Heart right ventricle (tissue), 16 donors: ENCODE measurements at regions of chr3 and their contacts with region 1.

Region 1: DNA sequence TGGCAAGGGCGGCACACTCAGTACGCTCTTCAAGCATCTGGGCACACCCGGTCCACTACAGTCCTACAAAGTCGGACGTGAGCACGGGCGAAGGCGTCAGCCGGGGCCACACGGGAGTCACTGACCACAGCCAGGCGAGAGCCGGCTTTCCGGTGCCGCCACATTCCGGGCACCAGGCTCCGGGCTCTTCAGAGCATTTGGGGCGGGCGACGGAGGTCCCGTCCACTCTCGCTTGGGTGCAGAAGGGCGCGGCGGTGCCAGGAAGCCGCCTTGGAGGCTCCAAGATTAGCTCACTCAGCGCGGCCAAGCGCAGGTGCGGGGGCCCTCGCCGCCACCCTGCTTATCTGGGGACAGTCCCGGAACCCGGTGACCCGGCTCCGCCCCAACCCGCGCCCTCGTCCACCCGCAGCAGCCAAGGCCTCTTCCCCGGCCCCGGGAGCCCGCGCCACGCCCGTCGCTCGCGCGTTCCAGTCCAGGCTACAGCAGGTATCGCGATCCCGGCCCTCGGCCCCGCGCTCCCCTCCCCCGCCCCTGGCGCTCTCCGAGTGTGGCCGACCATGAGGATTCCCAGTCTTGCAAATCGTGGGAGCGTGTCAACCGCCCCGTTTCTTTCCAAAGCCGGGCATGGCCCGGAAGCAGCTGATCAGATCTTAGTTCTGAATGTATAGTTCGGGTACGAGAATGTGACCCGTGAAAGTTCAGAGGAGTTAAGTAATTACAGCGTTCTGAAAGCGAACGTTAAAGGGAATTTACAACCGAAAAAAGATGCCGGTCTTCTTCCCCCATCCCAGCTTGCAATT is at the start of gene ADPRH:
- DNase-seq: peak; percentile 86 to 89
- ATAC-seq: peak; percentile 94 to 96 (median 95)
- H3K4me3 ChIP-seq: peak within 1 kb of the TSS; percentile 37 to 81 (median 64)
- H3K27ac ChIP-seq: peak within 1 kb of the TSS; percentile 87 to 99 (median 94)
- H3K4me1 ChIP-seq: peaks cover 0 to 25% (median 17%) of the 10 kb centered on the region in 9 donors
- H3K27me3 ChIP-seq: no peaks in the 10 kb centered on the region
- CTCF ChIP-seq: no peak
- total RNA-seq, gene ADPRH: 7.5 to 16.9 (median 12.6) TPM

Region 2: GRCh38 chr3:119524931-119525662 is 54.5 kb before region 1 on chr3:
- intact Hi-C with region 1: loop called in 2 of 10 experiments (anchors 10 kb)
- DNase-seq: no peak
- ATAC-seq: peak in 6 of 8 donors; percentile 20 to 73 (median 61)
- H3K4me3 ChIP-seq: no peak overlapping the region
- H3K27ac ChIP-seq: peak overlapping the region in 6 of 10 donors; percentile 18 to 50 (median 34)
- H3K4me1 ChIP-seq: peaks cover 0 to 12% (median 0%) of the 10 kb centered on the region in 9 donors
- H3K27me3 ChIP-seq: no peaks in the 10 kb centered on the region
- CTCF ChIP-seq: peak in 8 of 9 donors; percentile 31 to 74 (median 54)

Region 3: DNA sequence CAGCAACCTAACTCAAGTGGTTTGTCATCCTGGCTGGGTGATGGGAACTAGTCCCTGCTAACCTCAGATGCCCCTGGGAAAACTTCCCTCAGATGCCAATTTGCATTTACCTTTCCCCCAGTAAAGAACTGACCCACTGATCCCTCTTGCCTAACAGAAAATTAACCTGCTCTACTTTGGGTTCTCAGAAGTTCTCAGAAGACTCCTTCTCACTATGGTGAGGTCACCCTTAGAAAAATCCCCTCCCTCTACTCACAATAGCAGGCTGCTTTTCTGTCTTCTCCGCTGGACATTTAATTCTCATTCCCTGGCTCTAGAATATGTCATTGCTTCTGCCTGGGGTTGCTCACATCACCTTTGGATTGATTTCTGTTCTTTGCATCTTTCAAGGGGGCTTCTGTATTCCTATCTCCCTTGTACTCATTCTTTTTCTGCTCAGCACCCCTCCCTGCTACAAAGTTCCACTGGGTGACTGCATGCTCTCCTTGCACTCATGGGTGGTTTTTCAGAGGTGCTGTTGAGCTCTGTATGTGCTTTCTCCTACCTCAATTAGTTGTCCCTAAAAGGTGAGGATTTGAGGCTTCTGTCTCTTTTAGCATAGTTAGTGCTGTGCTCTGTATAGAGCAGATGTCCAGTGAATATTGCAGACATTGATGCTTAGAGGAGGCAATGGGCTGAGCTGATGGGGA is 19.0 kb after region 1 on chr3:
- intact Hi-C with region 1: loop called in 1 of 10 experiments (anchors 2 kb)
- DNase-seq: no peak
- ATAC-seq: no peak
- H3K4me3 ChIP-seq: no peak overlapping the region
- H3K27ac ChIP-seq: peak overlapping the region in 9 of 10 donors; percentile 65 to 90 (median 77)
- H3K4me1 ChIP-seq: peaks cover 6 to 77% (median 56%) of the 10 kb centered on the region in 9 donors
- H3K27me3 ChIP-seq: no peaks in the 10 kb centered on the region
- CTCF ChIP-seq: no peak

Region 4: DNA sequence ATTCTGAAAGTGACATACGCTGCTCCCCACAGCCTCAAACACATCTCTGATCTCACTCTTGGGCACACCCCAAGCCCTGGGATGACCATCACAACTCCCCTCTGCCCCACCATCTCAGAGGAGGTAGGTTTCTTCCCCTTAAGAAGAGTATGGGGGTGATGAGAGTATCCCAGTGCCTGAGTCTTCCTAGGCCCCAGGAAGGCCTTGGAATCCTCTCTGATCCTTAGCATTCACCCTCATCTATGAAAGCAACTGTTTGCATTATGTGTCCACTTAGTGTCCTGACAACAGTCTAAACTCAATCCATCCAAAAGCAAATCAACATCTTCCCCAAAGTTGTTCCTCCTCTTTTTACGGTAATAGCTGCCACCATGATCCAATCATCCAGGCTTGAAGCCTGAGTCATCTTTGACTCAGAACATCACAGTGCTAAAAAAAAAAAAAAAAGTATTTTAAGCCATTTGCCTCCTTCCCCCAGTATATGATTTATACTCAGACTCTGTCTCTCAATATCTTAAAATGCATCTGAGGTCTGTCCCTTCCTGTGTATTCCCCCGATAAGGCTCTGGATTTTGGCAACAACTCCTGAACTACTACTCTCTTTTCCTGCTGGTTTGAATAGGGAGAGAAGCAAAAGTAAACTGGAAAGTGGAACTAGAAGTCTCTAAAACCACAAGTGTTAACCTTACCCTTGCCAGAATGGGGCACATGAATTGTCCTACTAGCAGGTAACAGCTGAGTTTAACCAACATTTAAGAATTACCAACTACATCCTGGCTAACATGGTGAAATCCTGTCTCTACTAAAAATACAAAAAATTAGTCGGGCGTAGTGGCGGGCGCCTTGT is 58.3 kb after region 1 on chr3:
- intact Hi-C with region 1: loop called in 2 of 10 experiments (anchors 5 kb)
- DNase-seq: no peak
- ATAC-seq: peak; percentile 25 to 76 (median 51)
- H3K4me3 ChIP-seq: peak overlapping the region in 4 of 10 donors; percentile 4 to 14 (median 10)
- H3K27ac ChIP-seq: peak overlapping the region; percentile 71 to 94 (median 88)
- H3K4me1 ChIP-seq: peaks cover 12 to 68% (median 56%) of the 10 kb centered on the region in 9 donors
- H3K27me3 ChIP-seq: no peaks in the 10 kb centered on the region
- CTCF ChIP-seq: no peak

Region 5: GRCh38 chr3:119652306-119653033 is 72.9 kb after region 1 on chr3:
- intact Hi-C with region 1: loop called in 2 of 10 experiments (anchors 5 kb)
- DNase-seq: peak; percentile 45 to 75
- ATAC-seq: peak; percentile 73 to 89 (median 82)
- H3K4me3 ChIP-seq: peak overlapping the region in 1 of 10 donors; percentile 17
- H3K27ac ChIP-seq: peak overlapping the region; percentile 79 to 98 (median 92)
- H3K4me1 ChIP-seq: peaks cover 13 to 80% (median 67%) of the 10 kb centered on the region in 9 donors
- H3K27me3 ChIP-seq: no peaks in the 10 kb centered on the region
- CTCF ChIP-seq: no peak